OCI-LY7 (cell line): ENCODE measurements at regions of chr1 and their contacts with region 1.

Region 1: GRCh38 chr1:223161321-223161720 is 18.3 kb upstream of the TLR5 start:
- DNase-seq: no peak
- H3K4me3 ChIP-seq: no peak overlapping the region
- H3K27ac ChIP-seq: no peak overlapping the region
- H3K4me1 ChIP-seq: no peaks in the 10 kb centered on the region
- CTCF ChIP-seq: no peak

Region 2: DNA sequence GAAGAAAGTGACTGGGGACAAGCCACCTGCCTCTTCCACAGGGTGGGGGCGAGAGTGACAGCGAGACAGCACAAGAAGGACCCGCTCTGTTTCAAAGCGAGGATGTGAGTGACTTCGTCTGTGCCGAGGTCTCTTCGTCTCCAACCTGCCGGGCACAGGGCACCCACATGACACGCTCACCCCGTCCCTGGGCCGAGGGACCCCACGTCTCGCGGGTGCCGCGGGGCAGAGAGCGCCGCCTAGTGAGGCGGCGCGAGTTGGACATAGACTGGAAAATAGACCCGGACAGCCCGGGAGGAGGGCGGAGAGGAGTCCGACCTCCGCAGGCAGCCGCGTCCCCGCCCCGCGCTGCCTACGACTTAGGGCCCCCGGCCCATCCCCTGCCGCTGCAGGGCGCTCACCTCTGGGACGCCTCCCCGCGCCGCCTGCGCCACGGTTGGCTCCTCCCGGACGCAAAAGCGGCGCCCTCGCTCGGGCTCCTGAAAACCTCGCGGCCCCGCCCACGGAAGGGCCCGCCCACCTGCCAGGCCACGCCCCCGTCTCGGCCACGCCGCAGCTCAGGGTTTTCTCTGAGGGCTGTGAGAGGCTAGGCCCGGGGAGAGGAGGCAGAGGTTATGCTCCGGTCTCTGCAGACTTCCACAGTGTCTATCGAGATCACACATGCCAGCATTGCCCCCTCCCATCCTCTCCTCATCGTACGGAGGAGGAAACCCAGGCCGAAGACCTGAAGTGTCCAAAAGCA is 18.4 kb before region 1 on chr1 and contains the start of gene TLR5:
- CTCF ChIA-PET with region 1: interaction called, 15 read pairs
- POLR2A ChIA-PET with region 1: no interaction called
- intact Hi-C with region 1: no loop called
- DNase-seq: peak; percentile 78
- H3K4me3 ChIP-seq: peak within 1 kb of the TSS; percentile 67
- H3K27ac ChIP-seq: no peak within 1 kb of the TSS
- H3K4me1 ChIP-seq: peaks cover 7% of the 10 kb centered on the region
- CTCF ChIP-seq: peak; percentile 78
- total RNA-seq, gene TLR5: not detected in 2 replicates

Region 3: GRCh38 chr1:223175032-223175431 is 13.7 kb after region 1 on chr1:
- CTCF ChIA-PET with region 1: no interaction called
- POLR2A ChIA-PET with region 1: no interaction called
- intact Hi-C with region 1: no loop called
- DNase-seq: no peak
- H3K4me3 ChIP-seq: no peak overlapping the region
- H3K27ac ChIP-seq: no peak overlapping the region
- H3K4me1 ChIP-seq: no peaks in the 10 kb centered on the region
- CTCF ChIP-seq: no peak